Breast epithelium (tissue), 4 donors: ENCODE measurements at regions of chr4 and their contacts with region 1.

Region 1: DNA sequence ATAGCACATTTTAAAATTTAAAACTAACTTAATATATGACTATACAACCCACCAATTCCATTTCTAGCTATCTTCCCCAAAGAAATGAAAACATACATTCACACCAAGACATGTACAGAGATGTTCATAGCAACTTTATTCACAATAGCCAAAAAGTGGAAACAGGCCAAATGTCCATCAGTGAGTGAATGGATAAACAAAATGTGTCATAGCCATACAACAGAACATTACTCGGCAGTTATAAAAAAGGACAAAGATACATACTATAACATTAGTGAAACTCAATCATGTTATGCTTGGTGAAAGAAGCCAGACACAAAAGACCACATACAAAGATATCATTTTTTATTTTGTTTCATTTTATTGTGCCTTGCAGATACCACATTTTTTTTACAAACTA is 396.8 kb downstream of the PACRGL start:
- DNase-seq: no peak
- H3K4me3 ChIP-seq: no peak overlapping the region
- H3K27ac ChIP-seq: no peak overlapping the region
- H3K4me1 ChIP-seq: no peaks in the 10 kb centered on the region
- H3K27me3 ChIP-seq: no peaks in the 10 kb centered on the region
- CTCF ChIP-seq: no peak
- POLR2A ChIP-seq: no peak

Region 2: GRCh38 chr4:21387683-21388082 is 290.7 kb after region 1 on chr4:
- intact Hi-C with region 1: loop called (anchors 5 kb)
- DNase-seq: no peak
- H3K4me3 ChIP-seq: no peak overlapping the region
- H3K27ac ChIP-seq: no peak overlapping the region
- H3K4me1 ChIP-seq: no peaks in the 10 kb centered on the region
- H3K27me3 ChIP-seq: no peaks in the 10 kb centered on the region
- CTCF ChIP-seq: no peak
- POLR2A ChIP-seq: no peak